ENCODE measurements at regions of chr3 and their contacts with region 1.

Region 1: DNA sequence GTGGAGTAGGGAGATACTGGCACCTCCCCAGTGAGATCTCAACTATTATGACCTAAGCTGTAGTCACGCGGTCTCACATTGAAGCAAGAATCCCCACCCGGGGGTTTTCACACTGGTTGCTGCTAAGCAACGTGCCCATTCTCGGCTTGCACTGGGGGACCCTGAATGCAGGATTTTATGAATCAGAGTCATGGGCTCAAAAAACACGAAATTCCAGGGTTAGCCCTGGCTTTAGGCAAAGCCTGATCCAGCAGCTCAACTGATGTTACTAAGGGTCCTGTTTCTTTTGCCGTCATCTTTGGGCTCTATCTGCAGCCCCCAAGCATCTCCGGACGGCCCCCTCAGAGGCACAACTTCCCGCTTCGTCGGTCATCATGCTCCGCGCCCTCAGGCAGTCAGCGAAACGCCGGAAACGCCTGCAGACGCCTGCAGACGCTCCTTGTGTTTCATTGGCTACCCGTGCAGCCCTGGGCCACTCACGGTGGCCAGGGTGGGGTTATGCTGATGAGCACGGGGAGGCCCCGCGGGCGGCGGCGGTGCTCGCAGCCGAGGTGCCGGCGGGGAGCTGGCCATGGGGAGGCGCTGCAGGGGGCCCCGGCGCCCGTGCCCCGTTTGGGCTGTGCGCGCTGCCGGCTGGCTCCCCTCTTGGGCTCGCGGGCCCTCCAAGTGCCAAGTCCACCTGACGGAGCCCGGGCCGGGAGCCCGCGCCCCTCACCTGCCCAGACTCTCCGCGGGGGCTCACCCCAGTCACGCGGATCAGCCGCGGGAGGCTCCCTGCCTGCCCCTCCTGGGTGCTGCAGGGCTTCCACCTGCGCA is 25.8 kb downstream of the EFCC1 start:
- DNase-seq: peak; percentile 87 to 96 (median 92)
- ATAC-seq: peak; percentile 97
- H3K4me3 Mint-ChIP-seq: peak overlapping the region; percentile 84 to 94 (median 90)
- H3K27ac Mint-ChIP-seq: peak overlapping the region; percentile 92 to 99 (median 98)
- H3K4me1 Mint-ChIP-seq: peaks cover 16 to 32% (median 30%) of the 10 kb centered on the region in 4 donors
- H3K27me3 Mint-ChIP-seq: no peaks in the 10 kb centered on the region

Region 2: DNA sequence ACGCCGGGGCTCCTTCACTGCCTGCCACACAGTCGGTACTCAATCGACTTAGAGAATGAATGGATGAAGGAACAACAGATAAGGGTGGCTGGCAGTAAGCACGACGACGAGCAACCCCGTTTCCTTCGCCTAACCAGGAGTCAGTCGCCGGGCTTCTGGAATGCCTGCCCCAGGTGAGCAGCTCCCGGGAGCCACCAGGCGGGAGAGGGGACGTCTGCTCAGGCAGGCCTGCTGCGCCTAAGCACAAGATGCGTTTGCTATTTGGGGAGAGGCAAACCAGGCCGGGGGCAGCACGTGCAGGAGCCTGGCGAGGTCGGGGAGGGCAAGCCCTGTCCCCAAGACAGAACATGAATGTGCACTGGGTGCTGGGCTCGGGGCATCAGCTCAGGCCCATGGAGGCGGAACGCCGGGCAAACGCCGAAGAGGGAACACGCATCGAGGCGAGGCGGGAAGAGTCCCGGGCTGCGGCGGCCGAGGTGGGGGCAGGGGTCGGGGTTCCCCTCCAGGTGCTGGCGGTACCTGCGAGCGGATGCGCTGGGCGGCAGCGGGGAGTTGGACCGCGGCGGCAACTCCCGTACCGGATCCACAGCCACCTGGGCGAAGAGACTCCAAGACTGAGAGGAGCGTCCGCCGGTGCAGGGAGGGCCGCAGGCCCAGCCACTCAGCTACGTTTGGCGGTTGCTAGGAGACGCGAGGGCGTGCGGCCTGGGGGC is 33.3 kb before region 1 on chr3 and contains the start of gene CFAP92:
- POLR2A ChIA-PET with region 1: interaction called, 24 read pairs
- DNase-seq: peak; percentile 84 to 95 (median 90)
- ATAC-seq: peak; percentile 94 to 95
- H3K4me3 Mint-ChIP-seq: peak within 1 kb of the TSS; percentile 68 to 90 (median 84)
- H3K27ac Mint-ChIP-seq: peak within 1 kb of the TSS; percentile 60 to 94 (median 88)
- H3K4me1 Mint-ChIP-seq: peaks cover 23 to 39% (median 36%) of the 10 kb centered on the region in 4 donors
- H3K27me3 Mint-ChIP-seq: peaks cover 0 to 4% (median 0%) of the 10 kb centered on the region in 5 donors
- polyA plus RNA-seq, gene CFAP92: 0.18 to 0.23 (median 0.20) TPM

Measured in naive thymus-derived CD8-positive, alpha-beta T cell (primary cell).